PC-3 (cell line): ENCODE measurements at regions of chr6 and their contacts with region 1.

Region 1: DNA sequence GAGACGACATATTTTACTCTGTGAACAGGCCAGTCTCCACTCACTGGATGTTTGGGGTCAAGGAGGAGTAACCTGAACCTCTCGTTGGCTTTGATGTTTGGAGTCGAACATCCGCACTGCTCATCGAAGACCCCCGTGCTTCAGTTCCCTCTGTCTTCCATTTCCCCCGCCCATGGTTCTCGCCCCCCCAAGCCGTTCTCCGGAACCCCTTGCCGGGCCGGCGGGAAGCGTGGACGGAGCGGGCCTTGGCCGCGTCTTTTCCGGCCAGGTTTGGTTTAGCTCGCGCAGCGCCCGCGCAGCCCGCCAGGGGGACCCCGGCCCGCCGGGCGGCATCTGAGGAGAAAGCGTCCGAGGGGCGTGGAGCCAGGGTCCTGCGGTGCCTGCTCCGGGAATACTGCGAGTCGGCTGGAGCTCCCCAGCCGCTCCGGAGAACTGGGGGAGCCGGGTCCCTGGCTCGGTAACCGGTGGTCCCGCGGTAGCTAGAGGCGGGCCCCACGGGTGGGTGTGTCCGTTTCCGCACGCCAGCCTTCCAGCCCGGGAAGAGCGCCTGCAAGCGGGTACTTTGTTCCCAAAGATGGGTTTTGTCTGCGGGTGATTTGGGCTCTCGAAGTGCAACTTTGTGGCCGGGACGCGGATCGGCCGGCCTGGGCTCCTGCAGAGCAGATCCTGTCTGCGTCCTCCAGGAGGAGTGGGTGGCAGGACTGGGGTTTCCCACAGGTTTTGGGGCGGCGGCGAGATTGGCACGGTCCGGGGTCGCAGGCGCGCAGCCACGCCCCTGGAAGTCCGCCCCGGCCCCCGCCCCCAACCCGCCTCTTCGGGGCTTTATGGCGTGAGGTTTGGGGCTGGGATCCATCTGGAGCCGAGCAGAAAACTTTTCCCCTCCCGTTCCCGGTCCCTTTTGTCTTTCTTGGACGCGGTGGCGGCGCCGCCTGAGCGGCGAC is at the start of gene TMEM200A:
- DNase-seq: peak; percentile 27
- ATAC-seq: peak; percentile 67
- H3K4me3 ChIP-seq: peak within 1 kb of the TSS; percentile 65
- H3K27ac ChIP-seq: no peak within 1 kb of the TSS
- H3K4me1 ChIP-seq: no peaks in the 10 kb centered on the region
- H3K27me3 ChIP-seq: peaks cover 27% of the 10 kb centered on the region
- CTCF ChIP-seq: peak; percentile 60
- total RNA-seq, gene TMEM200A: 0.40 TPM in 1 of 2 replicates, not detected in the other

Region 2: GRCh38 chr6:130385064-130385695 is 19.7 kb after region 1 on chr6:
- CTCF ChIA-PET with region 1: no interaction called
- POLR2A ChIA-PET with region 1: no interaction called
- intact Hi-C with region 1: no loop called
- DNase-seq: no peak
- ATAC-seq: no peak
- H3K4me3 ChIP-seq: no peak overlapping the region
- H3K27ac ChIP-seq: no peak overlapping the region
- H3K4me1 ChIP-seq: no peaks in the 10 kb centered on the region
- H3K27me3 ChIP-seq: peaks cover 19% of the 10 kb centered on the region
- CTCF ChIP-seq: no peak

Region 3: DNA sequence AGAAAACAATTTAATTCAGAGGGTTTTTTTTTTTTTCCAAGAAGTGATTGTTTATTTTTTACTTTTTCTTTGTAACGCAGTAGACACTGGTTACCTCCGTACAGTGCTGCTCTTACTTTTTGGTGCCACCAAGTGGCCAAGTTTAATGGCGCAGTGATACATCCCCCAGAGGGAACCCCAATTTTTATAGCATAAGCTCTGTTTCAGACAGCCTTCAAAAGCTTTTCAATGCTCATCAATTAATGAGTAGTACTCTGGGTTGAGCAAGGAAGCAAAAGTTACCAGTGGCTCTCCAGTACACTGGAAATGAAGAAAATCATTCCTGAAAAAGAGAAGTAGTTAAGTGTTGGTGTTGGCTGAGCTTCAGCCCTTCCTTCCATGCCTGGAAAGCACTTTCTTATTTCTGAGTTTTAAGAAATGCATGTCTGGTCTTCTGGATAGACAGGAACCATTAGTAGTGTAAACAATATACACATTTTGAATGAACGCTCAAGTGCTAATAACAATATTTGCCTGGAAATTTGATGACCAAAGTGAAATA is 332.6 kb after region 1 on chr6:
- CTCF ChIA-PET with region 1: no interaction called
- POLR2A ChIA-PET with region 1: no interaction called
- intact Hi-C with region 1: loop called (anchors 5 kb)
- DNase-seq: peak; percentile 62
- ATAC-seq: peak; percentile 81
- H3K4me3 ChIP-seq: no peak overlapping the region
- H3K27ac ChIP-seq: no peak overlapping the region
- H3K4me1 ChIP-seq: peaks cover 4% of the 10 kb centered on the region; the same call in 1 of the 2 replicates
- H3K27me3 ChIP-seq: no peaks in the 10 kb centered on the region
- CTCF ChIP-seq: peak; percentile 89